Activated T-helper 1 cell treated with anti-CD3 and anti-CD28 coated beads, Interleukin-12 subunit alpha, Interleukin-12 subunit beta, Interleukin-2, Interleukin-4 antibody, amounts not matched to agents 30 ng/mL and 10 ng/mL and 1 ng/mL, durations not matched to agents 14 hours and 24 hours and 36 hours (primary cell): ENCODE measurements at regions of chr10 and their contacts with region 1.

Region 1: DNA sequence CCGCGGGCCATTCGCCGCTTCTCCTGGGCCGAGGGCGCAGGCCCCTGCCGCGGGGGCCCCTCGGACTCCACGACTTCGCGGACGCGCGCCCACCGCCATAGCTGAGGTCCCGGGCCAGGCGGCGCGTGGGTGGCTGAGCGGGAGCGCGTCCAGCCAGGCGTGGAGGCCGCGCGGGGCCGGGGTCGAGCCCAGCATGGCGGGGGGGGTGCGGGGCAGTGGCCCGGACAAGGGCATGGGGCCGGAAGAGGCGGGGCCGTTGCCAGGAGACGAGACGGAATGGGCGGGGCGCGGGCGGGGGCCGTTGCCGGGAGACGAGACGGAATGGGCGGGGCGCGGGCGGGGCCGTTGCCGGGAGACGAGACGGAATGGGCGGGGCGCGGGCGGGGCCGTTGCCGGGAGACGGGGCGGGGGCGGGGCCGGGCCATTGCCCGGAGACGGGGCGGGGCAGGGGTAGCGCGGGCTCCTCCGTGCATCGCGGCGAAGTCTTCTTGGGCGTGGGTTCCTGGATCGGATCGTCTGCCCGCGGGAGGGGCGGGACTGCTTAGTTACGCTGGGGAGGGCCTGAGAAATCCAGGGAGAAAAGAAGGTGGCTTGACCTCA is 14.8 kb downstream of the ADAM8 start:
- DNase-seq: peak; percentile 76
- H3K4me3 Mint-ChIP-seq: peak overlapping the region; percentile 65
- H3K27ac Mint-ChIP-seq: peak overlapping the region; percentile 48
- H3K4me1 Mint-ChIP-seq: peaks cover 56% of the 10 kb centered on the region
- H3K27me3 Mint-ChIP-seq: peaks cover 5% of the 10 kb centered on the region

Region 2: GRCh38 chr10:132961787-132962622 is 299.8 kb before region 1 on chr10:
- intact Hi-C with region 1: loop called (anchors 1 kb)
- DNase-seq: peak; percentile 54
- H3K4me3 Mint-ChIP-seq: peak overlapping the region; percentile 90
- H3K27ac Mint-ChIP-seq: peak overlapping the region; percentile 68
- H3K4me1 Mint-ChIP-seq: peaks cover 16% of the 10 kb centered on the region
- H3K27me3 Mint-ChIP-seq: peaks cover 11% of the 10 kb centered on the region

Region 3: DNA sequence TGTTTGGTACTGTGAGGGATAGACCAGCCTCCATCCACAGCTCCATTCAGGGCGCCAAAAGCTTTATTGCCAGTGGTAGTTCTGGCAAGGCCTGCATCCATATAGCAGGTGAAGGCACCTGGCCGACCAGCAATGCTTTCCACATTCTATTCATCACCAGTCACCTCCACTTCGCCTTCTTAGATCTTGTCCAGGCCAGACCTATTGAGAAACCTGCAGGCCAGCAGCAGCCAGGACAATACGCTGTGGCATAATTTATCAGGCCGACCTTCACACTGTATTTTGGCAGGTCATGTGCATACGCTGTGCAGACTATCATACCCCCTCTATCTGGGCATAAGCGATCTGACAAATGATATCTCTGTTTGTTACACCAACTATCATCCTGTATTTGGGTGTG is 117.1 kb before region 1 on chr10:
- intact Hi-C with region 1: loop called (anchors 1 kb)
- DNase-seq: no peak
- H3K4me3 Mint-ChIP-seq: no peak overlapping the region
- H3K27ac Mint-ChIP-seq: no peak overlapping the region
- H3K4me1 Mint-ChIP-seq: peaks cover 8% of the 10 kb centered on the region
- H3K27me3 Mint-ChIP-seq: peaks cover 17% of the 10 kb centered on the region

Region 4: GRCh38 chr10:133278577-133279265 is 16.9 kb after region 1 on chr10:
- intact Hi-C with region 1: loop called (anchors 1 kb)
- DNase-seq: peak; percentile 63
- H3K4me3 Mint-ChIP-seq: peak overlapping the region; percentile 87
- H3K27ac Mint-ChIP-seq: peak overlapping the region; percentile 86
- H3K4me1 Mint-ChIP-seq: peaks cover 14% of the 10 kb centered on the region
- H3K27me3 Mint-ChIP-seq: no peaks in the 10 kb centered on the region

Region 5: GRCh38 chr10:133378251-133379096 is 116.6 kb after region 1 on chr10:
- intact Hi-C with region 1: loop called (anchors 5 kb)
- DNase-seq: peak; percentile 51
- H3K4me3 Mint-ChIP-seq: peak overlapping the region; percentile 79
- H3K27ac Mint-ChIP-seq: peak overlapping the region; percentile 44
- H3K4me1 Mint-ChIP-seq: peaks cover 11% of the 10 kb centered on the region
- H3K27me3 Mint-ChIP-seq: peaks cover 16% of the 10 kb centered on the region